ENCODE measurements at regions of chr3 and their contacts with region 1.

Region 1: DNA sequence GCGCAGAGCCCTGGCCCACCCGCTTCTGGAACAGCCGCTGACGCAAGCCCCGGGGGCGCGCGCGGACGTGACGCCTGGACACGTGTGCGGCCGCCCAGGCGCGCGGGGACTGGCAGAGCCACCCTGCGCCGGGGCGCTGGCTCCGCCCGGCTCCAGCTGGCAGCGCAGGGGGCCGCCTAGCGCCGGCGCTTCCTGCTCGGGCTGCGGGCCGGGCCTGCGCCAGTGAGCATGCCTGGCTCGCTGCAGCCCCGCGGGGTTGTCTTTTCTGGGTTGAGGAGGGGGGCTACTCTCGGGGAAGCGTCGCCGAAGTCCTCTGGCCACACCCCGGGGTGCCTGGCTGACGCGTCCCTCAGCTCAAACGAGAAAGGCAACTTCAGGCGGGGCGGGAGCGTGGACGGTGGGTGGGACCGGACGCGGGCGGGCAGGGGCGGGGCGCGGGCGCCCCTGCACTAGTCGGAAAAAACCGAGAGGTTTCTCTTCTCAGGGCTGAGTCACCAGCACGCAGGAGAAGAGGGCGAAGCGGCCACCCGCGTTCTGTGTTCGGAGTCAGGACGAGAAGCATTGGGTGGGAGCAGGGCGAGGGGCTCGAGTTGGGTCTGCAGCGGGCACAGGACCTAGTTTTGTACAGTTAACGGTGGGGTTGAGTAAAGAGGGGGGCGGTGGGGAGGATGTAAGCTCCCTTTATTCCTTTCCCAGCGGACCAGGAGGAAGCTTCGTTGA is at the start of gene SIAH2:
- DNase-seq: peak; percentile 95
- ATAC-seq: peak; percentile 76
- H3K4me3 Mint-ChIP-seq: peak within 1 kb of the TSS; percentile 100
- H3K27ac Mint-ChIP-seq: peak within 1 kb of the TSS; percentile 100
- H3K4me1 Mint-ChIP-seq: peaks cover 47% of the 10 kb centered on the region
- H3K27me3 Mint-ChIP-seq: no peaks in the 10 kb centered on the region
- CTCF ChIP-seq: no peak
- total RNA-seq, gene SIAH2: 90.3 to 91.1 TPM

Region 2: DNA sequence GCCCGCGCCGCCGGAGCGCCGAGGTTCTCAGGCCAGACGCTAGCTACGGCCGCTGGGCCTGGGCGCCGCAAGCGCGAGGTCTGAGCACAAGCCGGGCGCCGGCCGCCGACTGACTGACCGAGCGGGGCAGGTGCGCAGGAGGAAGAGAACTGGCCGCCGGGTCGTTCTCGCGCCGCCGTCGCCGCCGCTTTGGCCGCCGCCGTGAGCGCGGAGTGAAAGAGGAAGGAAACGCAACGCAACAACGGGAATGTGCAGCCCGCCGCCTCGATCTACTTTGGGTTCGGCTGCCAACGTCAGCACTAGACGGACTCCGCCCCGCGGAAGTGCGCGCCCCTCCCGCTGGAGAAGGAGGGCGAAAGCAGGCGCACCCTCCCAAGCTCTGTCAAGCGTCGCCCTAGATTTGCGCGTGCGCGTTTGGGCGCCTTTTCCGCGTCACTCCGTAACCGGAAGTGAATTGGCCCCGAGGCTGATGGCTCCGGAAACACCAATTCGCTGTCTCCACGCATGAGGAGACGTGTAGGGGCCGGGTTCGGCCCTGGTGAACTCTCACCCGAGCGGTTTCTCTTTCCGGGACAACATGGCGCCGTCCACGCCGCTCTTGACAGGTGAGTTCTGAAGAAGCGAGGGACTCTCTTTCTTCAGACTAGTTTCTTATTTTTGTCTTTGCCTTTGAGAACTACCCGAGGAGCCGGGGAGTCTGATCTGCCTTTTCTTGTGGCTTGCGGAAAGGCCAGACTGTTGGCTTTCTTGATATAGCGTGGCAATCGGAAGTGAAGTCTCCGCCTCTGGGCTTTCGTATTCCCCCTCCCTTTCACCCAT is 216.8 kb before region 1 on chr3 and contains the starts of genes EIF2A and SERP1:
- CTCF ChIA-PET with region 1: interaction called, 4 read pairs
- POLR2A ChIA-PET with region 1: interaction called, 46 read pairs
- intact Hi-C with region 1: loop called (anchors 5 kb)
- DNase-seq: peak; percentile 98
- ATAC-seq: peak; percentile 91
- H3K4me3 Mint-ChIP-seq: peak within 1 kb of the TSS; percentile 95
- H3K27ac Mint-ChIP-seq: peak within 1 kb of the TSS; percentile 99
- H3K4me1 Mint-ChIP-seq: peaks cover 59% of the 10 kb centered on the region
- H3K27me3 Mint-ChIP-seq: no peaks in the 10 kb centered on the region
- CTCF ChIP-seq: no peak
- total RNA-seq, gene EIF2A: 130 to 136 TPM
- total RNA-seq, gene SERP1: 115 TPM

Region 3: GRCh38 chr3:150703299-150704134 is 59.8 kb before region 1 on chr3 and contains the start of gene ERICH6:
- CTCF ChIA-PET with region 1: interaction called, 5 read pairs
- POLR2A ChIA-PET with region 1: interaction called, 15 read pairs
- intact Hi-C with region 1: no loop called
- DNase-seq: peak; percentile 92
- ATAC-seq: peak; percentile 96
- H3K4me3 Mint-ChIP-seq: peak within 1 kb of the TSS; percentile 91
- H3K27ac Mint-ChIP-seq: peak within 1 kb of the TSS; percentile 96
- H3K4me1 Mint-ChIP-seq: peaks cover 37% of the 10 kb centered on the region
- H3K27me3 Mint-ChIP-seq: no peaks in the 10 kb centered on the region
- CTCF ChIP-seq: peak; percentile 10
- total RNA-seq, gene ERICH6: not detected

Region 4: DNA sequence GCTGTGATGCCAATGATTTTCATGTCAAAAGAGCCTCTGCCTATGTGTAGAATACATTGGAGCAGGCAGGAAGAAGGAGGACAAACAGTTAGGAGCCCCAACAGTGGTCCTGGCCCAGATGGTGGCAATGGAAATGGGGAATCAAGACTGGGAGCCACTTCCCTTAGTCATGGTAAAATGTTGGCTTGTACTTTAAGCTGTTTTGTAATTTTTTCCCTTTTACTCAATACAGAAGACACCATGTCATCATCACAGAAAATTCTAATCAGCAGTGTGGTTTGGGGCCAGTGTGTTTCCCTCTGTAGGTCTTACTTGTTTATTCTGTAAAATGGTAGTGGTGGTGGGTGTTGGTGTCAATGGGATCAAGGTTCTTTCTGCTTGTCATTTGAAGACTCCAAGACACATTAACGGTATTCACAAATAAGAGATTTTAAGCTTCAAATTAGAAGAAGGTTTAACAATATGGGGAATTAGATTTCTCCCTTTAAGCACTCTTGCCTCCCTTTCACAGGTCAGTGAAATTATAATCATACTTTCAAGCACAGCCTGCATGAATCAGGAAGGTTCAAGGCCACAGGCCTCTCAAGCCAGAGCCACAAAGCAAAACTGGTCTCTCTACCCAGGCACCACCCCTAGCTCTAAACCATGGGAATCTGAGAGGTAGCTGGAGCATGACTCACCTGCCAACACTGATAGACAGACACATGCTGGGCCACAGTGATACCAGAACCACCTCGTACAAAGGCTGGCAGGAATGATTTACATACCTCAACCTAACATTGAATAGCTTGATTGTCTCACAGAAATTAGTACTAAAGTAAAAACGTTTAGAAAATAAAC is 25.2 kb before region 1 on chr3:
- CTCF ChIA-PET with region 1: interaction called, 10 read pairs
- POLR2A ChIA-PET with region 1: interaction called, 125 read pairs
- intact Hi-C with region 1: loop called (anchors 1 kb)
- DNase-seq: peak; percentile 77
- ATAC-seq: peak; percentile 67
- H3K4me3 Mint-ChIP-seq: peak overlapping the region; percentile 29
- H3K27ac Mint-ChIP-seq: peak overlapping the region; percentile 99
- H3K4me1 Mint-ChIP-seq: peaks cover 74% of the 10 kb centered on the region
- H3K27me3 Mint-ChIP-seq: no peaks in the 10 kb centered on the region
- CTCF ChIP-seq: no peak

Region 5: GRCh38 chr3:150775091-150775501 is 11.8 kb after region 1 on chr3:
- CTCF ChIA-PET with region 1: interaction called, 24 read pairs
- POLR2A ChIA-PET with region 1: interaction called, 38 read pairs
- intact Hi-C with region 1: no loop called
- DNase-seq: no peak
- ATAC-seq: no peak
- H3K4me3 Mint-ChIP-seq: no peak overlapping the region
- H3K27ac Mint-ChIP-seq: no peak overlapping the region
- H3K4me1 Mint-ChIP-seq: no peaks in the 10 kb centered on the region
- H3K27me3 Mint-ChIP-seq: peaks cover 1% of the 10 kb centered on the region
- CTCF ChIP-seq: no peak

Region 6: GRCh38 chr3:151203051-151203420 is 439.8 kb after region 1 on chr3 and contains the start of gene GPR171:
- CTCF ChIA-PET with region 1: interaction called, 3 read pairs
- POLR2A ChIA-PET with region 1: interaction called, 86 read pairs
- intact Hi-C with region 1: loop called (anchors 5 kb)
- DNase-seq: peak; percentile 82
- ATAC-seq: peak; percentile 64
- H3K4me3 Mint-ChIP-seq: peak within 1 kb of the TSS; percentile 87
- H3K27ac Mint-ChIP-seq: peak within 1 kb of the TSS; percentile 96
- H3K4me1 Mint-ChIP-seq: peaks cover 54% of the 10 kb centered on the region
- H3K27me3 Mint-ChIP-seq: no peaks in the 10 kb centered on the region
- CTCF ChIP-seq: no peak
- total RNA-seq, gene GPR171: 91.8 to 101 TPM